Activated CD4-positive, alpha-beta memory T cell treated with anti-CD3 and anti-CD28 coated beads for 36 hours (primary cell): ENCODE measurements at regions of chr1 and their contacts with region 1.

Region 1: GRCh38 chr1:173202430-173203145 is 4.5 kb downstream of the TNFSF4 start:
- DNase-seq: no peak
- H3K4me3 Mint-ChIP-seq: no peak overlapping the region
- H3K27ac Mint-ChIP-seq: no peak overlapping the region
- H3K4me1 Mint-ChIP-seq: peaks cover 32% of the 10 kb centered on the region
- H3K27me3 Mint-ChIP-seq: peaks cover 3% of the 10 kb centered on the region

Region 2: DNA sequence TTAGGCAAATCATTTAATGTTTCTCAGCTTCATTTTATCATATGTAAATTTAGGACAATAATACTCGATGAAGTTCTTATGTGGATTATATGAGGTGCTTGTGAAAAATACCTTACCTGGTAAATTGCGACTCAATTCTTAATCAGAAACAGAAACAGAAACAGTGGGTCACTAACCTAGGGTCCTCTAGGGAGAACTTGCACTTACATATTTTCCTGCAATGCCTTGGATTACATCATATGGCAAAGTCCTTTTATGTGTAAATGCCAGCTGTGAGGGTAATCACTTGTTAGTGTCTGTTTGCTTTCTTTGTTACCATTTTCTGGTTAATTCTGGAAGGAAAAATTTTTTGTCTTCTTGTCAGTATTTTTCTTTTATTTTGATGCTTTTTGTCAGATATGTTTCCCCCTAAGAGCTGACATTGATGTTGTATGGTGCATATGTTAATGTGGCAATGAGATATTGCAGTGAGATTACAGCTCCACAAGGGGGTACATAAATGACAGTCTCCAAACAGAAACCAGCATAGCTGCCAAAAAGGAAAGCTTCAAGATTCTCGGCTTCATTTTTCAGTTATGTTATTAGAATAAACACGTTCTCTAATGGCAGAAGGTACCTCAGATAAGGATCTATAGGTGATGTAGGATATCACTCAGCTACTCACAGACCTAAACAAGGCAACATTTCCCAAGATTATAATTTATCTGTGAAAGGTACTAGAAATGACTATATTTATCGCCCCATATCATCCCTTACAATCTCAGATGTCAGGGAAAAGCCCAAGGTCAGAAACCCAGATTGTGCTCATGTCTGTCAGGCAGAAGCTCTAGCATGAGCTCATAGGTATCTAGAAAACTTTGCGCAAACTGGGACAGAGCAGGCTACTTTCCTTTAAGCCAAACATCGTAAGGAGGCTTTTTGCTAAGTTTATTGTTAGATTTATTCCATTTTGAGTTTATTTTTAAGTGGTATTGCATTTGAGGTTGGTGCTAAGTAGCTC is 423.8 kb before region 1 on chr1:
- CTCF ChIA-PET with region 1: interaction called, 13 read pairs
- POLR2A ChIA-PET with region 1: interaction called, 3 read pairs
- intact Hi-C with region 1: no loop called
- DNase-seq: no peak
- H3K4me3 Mint-ChIP-seq: no peak overlapping the region
- H3K27ac Mint-ChIP-seq: no peak overlapping the region
- H3K4me1 Mint-ChIP-seq: peaks cover 13% of the 10 kb centered on the region
- H3K27me3 Mint-ChIP-seq: peaks cover 6% of the 10 kb centered on the region

Region 3: DNA sequence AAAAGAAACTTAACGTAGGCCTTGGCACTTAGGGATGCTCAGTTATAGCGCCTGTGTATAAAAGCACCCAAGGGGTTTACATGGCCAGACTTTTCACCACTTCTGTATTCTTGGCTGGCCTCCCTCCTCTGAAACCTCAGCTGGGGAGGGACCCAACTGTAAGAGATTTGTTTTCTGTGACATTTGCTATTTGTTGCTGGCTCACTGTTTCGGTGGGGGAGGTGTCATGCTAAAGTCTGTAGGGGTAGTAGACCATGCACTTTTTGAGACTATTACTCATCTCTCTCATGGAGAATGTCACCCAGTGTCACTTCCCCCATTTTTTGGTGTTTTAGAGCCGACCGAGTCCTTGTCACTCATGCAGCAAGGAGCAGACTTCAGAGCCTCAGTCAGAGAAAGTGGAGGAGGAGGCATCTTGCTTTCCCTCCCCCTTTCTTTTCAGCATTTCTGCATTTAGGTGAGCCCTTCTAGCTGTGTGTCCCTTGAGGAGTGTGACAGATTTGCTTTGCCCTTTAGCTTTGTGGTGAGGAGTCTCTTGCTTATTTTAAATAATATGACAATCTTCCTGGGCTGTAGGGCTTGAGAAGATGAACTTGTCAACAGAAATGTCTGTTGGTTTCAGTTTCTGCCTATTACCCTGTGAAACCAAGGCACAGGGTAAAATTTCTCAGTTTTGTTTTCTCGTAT is 383.6 kb before region 1 on chr1:
- CTCF ChIA-PET with region 1: interaction called, 24 read pairs
- POLR2A ChIA-PET with region 1: no interaction called
- intact Hi-C with region 1: no loop called
- DNase-seq: peak; percentile 69
- H3K4me3 Mint-ChIP-seq: peak overlapping the region; percentile 4
- H3K27ac Mint-ChIP-seq: peak overlapping the region; percentile 63
- H3K4me1 Mint-ChIP-seq: peaks cover 24% of the 10 kb centered on the region
- H3K27me3 Mint-ChIP-seq: peaks cover 11% of the 10 kb centered on the region

Region 4: GRCh38 chr1:172826096-172826743 is 376.4 kb before region 1 on chr1:
- CTCF ChIA-PET with region 1: interaction called, 55 read pairs
- POLR2A ChIA-PET with region 1: no interaction called
- intact Hi-C with region 1: loop called (anchors 2 kb)
- DNase-seq: no peak
- H3K4me3 Mint-ChIP-seq: no peak overlapping the region
- H3K27ac Mint-ChIP-seq: no peak overlapping the region
- H3K4me1 Mint-ChIP-seq: no peaks in the 10 kb centered on the region
- H3K27me3 Mint-ChIP-seq: peaks cover 6% of the 10 kb centered on the region

Region 5: DNA sequence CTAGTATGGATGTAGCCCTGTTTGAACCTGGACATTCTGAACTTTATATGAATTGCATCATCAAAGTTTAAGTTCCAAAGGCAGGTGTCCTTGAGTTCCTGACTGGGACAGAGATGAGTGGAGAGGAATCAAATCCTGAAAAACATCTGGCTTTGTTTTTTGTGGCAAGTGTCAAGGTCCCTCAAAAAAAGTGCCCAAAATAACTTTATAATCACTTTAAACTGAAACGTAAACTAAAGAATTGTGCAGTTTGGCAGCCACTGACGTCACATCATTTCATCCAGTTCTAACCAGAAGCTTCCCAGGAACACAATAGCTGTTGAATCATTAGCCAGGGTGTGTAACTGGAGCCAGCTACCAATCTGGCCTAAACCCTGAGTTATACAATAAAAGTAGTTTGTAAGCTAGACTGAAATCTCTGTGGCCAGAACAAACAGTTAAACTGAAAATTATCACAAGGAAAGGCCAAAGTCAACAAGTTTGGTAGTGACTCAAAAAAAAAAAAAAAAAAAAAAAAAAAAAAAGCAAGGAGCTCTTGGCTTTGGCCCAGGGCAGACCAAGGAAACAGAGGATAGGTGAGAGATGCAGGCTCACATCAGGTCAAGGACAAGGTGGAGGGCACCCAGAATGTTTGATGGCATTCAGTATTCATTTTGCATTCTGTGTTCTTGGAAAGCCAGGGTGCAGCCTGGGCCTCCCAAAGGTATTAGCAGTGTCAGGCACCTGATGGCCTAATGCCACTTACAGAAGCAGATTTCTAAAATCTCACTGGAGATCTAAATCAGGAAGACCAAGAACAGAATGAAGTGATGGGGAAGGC is 226.2 kb before region 1 on chr1:
- CTCF ChIA-PET with region 1: no interaction called
- POLR2A ChIA-PET with region 1: no interaction called
- intact Hi-C with region 1: no loop called
- DNase-seq: no peak
- H3K4me3 Mint-ChIP-seq: no peak overlapping the region
- H3K27ac Mint-ChIP-seq: no peak overlapping the region
- H3K4me1 Mint-ChIP-seq: no peaks in the 10 kb centered on the region
- H3K27me3 Mint-ChIP-seq: no peaks in the 10 kb centered on the region

Region 6: GRCh38 chr1:173149887-173150286 is 52.7 kb before region 1 on chr1:
- CTCF ChIA-PET with region 1: no interaction called
- POLR2A ChIA-PET with region 1: no interaction called
- intact Hi-C with region 1: no loop called
- DNase-seq: peak; percentile 13
- H3K4me3 Mint-ChIP-seq: no peak overlapping the region
- H3K27ac Mint-ChIP-seq: no peak overlapping the region
- H3K4me1 Mint-ChIP-seq: peaks cover 25% of the 10 kb centered on the region
- H3K27me3 Mint-ChIP-seq: peaks cover 3% of the 10 kb centered on the region

Region 7: DNA sequence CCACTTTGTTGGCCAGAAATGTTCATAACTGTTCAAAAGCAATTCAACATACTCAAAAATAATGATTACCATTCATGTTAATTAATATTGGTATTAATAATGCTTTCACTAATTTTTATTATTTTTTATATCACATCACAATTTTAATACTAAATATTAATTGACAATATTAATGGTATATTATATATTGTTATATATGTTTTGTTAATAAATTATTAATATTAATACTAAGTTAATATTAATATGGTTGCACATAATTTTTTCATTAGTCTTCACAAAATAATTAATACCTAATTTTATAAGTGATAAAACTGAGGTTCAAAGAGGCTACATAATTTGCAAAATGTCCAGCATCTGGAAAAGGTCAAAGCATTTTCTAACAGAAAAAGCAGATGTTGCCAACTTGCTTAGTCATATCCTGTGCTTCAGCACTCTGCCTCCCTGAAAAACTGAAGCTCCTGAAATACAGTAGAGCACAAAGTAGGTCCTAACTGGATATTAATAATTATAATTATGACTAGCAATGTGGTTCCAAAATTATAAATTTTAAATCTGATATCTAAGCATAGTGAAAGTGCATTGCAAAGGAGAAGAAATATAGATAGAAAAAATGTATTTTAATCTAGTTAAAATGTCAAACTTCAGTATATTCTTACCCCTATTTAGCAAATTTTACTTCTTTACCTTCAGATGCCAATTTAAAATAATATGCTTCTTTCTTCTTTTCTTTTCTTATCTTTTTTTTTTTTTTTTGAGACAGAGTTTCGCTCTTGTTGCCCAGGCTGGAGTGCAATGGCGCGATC is 127.8 kb after region 1 on chr1:
- CTCF ChIA-PET with region 1: no interaction called
- POLR2A ChIA-PET with region 1: no interaction called
- intact Hi-C with region 1: loop called (anchors 1 kb)
- DNase-seq: no peak
- H3K4me3 Mint-ChIP-seq: no peak overlapping the region
- H3K27ac Mint-ChIP-seq: no peak overlapping the region
- H3K4me1 Mint-ChIP-seq: peaks cover 20% of the 10 kb centered on the region
- H3K27me3 Mint-ChIP-seq: no peaks in the 10 kb centered on the region

Region 8: GRCh38 chr1:173590557-173590956 is 388.0 kb after region 1 on chr1:
- CTCF ChIA-PET with region 1: no interaction called
- POLR2A ChIA-PET with region 1: no interaction called
- intact Hi-C with region 1: no loop called
- DNase-seq: no peak
- H3K4me3 Mint-ChIP-seq: no peak overlapping the region
- H3K27ac Mint-ChIP-seq: no peak overlapping the region
- H3K4me1 Mint-ChIP-seq: peaks cover 6% of the 10 kb centered on the region
- H3K27me3 Mint-ChIP-seq: peaks cover 2% of the 10 kb centered on the region